ENCODE measurements at regions of chr13 and their contacts with region 1.

Region 1: GRCh38 chr13:76723551-76724232 is 162.5 kb downstream of the KCTD12 start:
- DNase-seq: peak; percentile 95
- H3K4me3 ChIP-seq: no peak overlapping the region
- H3K27ac ChIP-seq: peak overlapping the region; percentile 81
- H3K4me1 ChIP-seq: peaks cover 32% of the 10 kb centered on the region
- H3K27me3 ChIP-seq: no peaks in the 10 kb centered on the region
- CTCF ChIP-seq: no peak
- POLR2A ChIP-seq: peak; percentile 15

Region 2: DNA sequence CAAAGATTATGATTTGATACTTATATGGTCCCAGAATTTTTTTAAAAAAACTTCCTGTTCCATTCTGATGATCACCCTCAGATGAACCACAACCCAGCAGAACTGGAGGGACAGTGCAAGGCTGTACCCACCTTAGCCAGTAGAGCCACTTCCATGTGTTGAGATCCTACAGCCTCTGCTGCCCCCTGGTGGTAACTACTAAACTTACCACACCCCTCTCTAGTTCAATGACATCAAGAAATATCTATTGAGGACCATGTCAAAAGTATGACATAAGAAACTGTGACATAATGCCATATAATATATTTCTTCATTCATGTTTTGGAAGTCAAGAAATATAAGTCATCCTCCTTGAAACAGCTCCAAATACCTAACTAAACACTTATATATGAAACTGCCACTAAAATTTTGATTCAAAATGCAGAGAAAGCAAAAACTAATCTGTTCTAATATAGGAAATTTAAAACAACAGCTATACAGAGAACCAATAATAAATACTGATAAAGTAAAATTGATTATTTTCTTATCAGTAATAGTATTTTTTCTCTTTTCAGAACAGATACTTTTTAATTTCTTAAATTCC is 250.0 kb before region 1 on chr13:
- CTCF ChIA-PET with region 1: no interaction called
- POLR2A ChIA-PET with region 1: no interaction called
- dilution Hi-C with region 1: no loop called
- intact Hi-C with region 1: no loop called
- DNase-seq: peak; percentile 85
- H3K4me3 ChIP-seq: no peak overlapping the region
- H3K27ac ChIP-seq: no peak overlapping the region
- H3K4me1 ChIP-seq: no peaks in the 10 kb centered on the region
- H3K27me3 ChIP-seq: peaks cover 2% of the 10 kb centered on the region in 2 experiments
- CTCF ChIP-seq: peak; percentile 67 to 68
- POLR2A ChIP-seq: no peak

Region 3: DNA sequence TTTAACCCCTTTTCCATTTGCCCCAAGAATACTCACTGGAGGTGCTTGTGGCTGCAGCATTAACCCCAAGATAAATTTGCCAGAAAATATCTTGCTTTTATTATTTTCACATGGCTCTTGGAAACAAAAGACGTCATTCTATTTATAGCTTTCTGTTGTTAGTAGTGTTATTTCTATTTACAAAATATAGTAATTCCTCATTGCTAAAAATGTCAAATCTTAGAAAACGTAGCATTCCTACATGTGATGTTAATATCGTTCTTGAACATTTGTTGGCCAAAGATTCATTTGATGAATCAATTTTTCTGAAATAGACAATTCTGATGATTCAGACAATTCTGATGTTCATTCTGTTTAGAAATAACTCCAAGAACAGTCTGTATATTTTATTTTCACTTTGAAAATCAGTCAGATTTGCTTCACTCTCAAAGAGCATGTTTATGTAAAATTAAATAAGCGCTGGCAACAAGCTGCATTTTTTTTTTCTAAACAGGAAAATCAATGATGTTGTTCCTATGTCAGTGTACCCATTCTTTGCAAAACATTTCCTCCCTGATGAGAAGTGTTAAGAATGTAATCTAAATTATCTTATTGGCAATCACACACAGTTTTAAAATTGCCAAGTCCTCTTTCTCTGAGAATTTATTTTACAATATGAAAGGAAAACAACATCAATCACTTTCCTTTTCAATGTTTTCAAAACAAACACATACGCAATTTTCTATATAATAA is 171.5 kb before region 1 on chr13:
- CTCF ChIA-PET with region 1: no interaction called
- POLR2A ChIA-PET with region 1: no interaction called
- dilution Hi-C with region 1: no loop called
- intact Hi-C with region 1: loop called (anchors 10 kb)
- DNase-seq: peak; percentile 88
- H3K4me3 ChIP-seq: peak overlapping the region in 1 of 3 experiments; percentile 7
- H3K27ac ChIP-seq: peak overlapping the region; percentile 80
- H3K4me1 ChIP-seq: peaks cover 10% of the 10 kb centered on the region
- H3K27me3 ChIP-seq: no peaks in the 10 kb centered on the region
- CTCF ChIP-seq: no peak
- POLR2A ChIP-seq: no peak

Region 4: GRCh38 chr13:76754414-76754813 is 30.7 kb after region 1 on chr13:
- CTCF ChIA-PET with region 1: interaction called, 9 read pairs
- POLR2A ChIA-PET with region 1: no interaction called
- dilution Hi-C with region 1: no loop called
- intact Hi-C with region 1: loop called (anchors 2 kb)
- DNase-seq: peak; percentile 90
- H3K4me3 ChIP-seq: no peak overlapping the region
- H3K27ac ChIP-seq: peak overlapping the region; percentile 47
- H3K4me1 ChIP-seq: peaks cover 24% of the 10 kb centered on the region
- H3K27me3 ChIP-seq: no peaks in the 10 kb centered on the region
- CTCF ChIP-seq: no peak
- POLR2A ChIP-seq: no peak

Region 5: DNA sequence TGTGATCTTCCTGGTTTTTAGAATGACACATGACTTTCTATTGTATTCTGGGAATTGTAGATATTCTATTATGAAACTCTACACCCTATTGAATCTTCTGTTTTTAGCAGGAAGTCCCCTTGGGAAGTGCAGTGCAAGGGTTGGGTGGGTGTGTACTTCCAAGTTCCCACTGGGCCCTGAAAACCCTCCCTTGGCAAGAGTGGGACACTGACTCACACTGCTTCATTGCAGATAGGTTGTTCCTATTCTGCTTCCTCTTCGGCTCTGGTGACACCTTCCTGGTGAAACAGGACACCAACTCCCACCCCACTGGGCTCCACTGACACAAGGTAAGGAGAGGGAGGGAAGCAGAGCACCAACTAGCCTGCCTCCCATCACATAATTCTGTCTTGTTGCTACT is 40.7 kb after region 1 on chr13:
- CTCF ChIA-PET with region 1: interaction called, 3 read pairs
- POLR2A ChIA-PET with region 1: no interaction called
- dilution Hi-C with region 1: no loop called
- intact Hi-C with region 1: loop called (anchors 1 kb)
- DNase-seq: peak; percentile 87
- H3K4me3 ChIP-seq: no peak overlapping the region
- H3K27ac ChIP-seq: peak overlapping the region; percentile 37
- H3K4me1 ChIP-seq: peaks cover 24% of the 10 kb centered on the region
- H3K27me3 ChIP-seq: no peaks in the 10 kb centered on the region
- CTCF ChIP-seq: no peak
- POLR2A ChIP-seq: no peak

Region 6: DNA sequence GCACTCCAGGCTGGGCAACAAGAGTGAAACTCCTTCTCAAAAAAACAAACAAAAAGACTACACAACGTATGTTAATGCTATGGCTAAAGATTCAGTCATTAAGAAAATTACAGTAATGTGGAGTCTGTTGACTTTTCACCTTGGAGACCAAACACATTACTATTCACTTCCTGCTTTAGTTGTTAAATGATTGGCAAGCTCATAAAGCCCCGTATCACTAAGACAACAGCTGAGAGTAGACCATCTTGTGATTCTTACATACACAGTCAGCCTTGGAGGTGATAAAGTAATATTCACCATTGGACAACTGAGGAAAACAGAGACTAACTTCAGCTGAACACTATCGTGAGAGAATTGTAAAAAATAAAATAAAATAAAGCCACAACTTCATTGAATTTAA is 76.0 kb after region 1 on chr13:
- CTCF ChIA-PET with region 1: no interaction called
- POLR2A ChIA-PET with region 1: no interaction called
- dilution Hi-C with region 1: no loop called
- intact Hi-C with region 1: loop called (anchors 5 kb)
- DNase-seq: peak; percentile 90
- H3K4me3 ChIP-seq: no peak overlapping the region
- H3K27ac ChIP-seq: no peak overlapping the region
- H3K4me1 ChIP-seq: peaks cover 6% of the 10 kb centered on the region
- H3K27me3 ChIP-seq: no peaks in the 10 kb centered on the region
- CTCF ChIP-seq: no peak
- POLR2A ChIP-seq: no peak

Region 7: DNA sequence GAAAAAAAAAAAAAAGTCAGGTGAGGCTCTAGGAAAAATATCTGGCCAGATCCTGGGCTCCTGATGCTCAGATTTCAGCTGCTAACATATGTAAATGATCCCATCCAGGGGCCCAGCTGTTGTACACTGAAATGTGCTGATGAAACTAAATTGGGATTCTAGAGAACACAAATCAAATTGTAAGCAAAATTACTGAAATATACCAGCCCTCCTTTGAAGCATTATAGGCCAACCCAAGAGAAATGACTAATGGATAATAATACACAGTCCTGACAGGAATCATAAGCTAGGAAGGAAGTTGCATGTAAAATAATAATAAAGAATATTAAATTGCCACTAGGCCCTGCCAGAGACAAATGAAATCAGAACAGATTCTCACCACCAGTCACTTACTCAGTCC is 144.7 kb after region 1 on chr13:
- CTCF ChIA-PET with region 1: no interaction called
- POLR2A ChIA-PET with region 1: no interaction called
- dilution Hi-C with region 1: no loop called
- intact Hi-C with region 1: no loop called
- DNase-seq: peak; percentile 69
- H3K4me3 ChIP-seq: no peak overlapping the region
- H3K27ac ChIP-seq: no peak overlapping the region
- H3K4me1 ChIP-seq: peaks cover 49% of the 10 kb centered on the region
- H3K27me3 ChIP-seq: no peaks in the 10 kb centered on the region
- CTCF ChIP-seq: no peak
- POLR2A ChIP-seq: no peak

Region 8: GRCh38 chr13:77002590-77003190 is 279.0 kb after region 1 on chr13:
- CTCF ChIA-PET with region 1: no interaction called
- POLR2A ChIA-PET with region 1: no interaction called
- dilution Hi-C with region 1: no loop called
- intact Hi-C with region 1: no loop called
- DNase-seq: peak; percentile 57
- H3K4me3 ChIP-seq: no peak overlapping the region
- H3K27ac ChIP-seq: no peak overlapping the region
- H3K4me1 ChIP-seq: no peaks in the 10 kb centered on the region
- H3K27me3 ChIP-seq: no peaks in the 10 kb centered on the region
- CTCF ChIP-seq: peak; percentile 55 to 67
- POLR2A ChIP-seq: no peak

Measured in endothelial cell of umbilical vein (primary cell).